Calu3 (cell line): ENCODE measurements at regions of chr18 and their contacts with region 1.

Region 1: GRCh38 chr18:3245853-3246634 is 1.6 kb upstream of the MYL12A start:
- DNase-seq: peak; percentile 89
- H3K4me3 Mint-ChIP-seq: peak overlapping the region; percentile 79
- H3K27ac Mint-ChIP-seq: peak overlapping the region; percentile 83
- H3K4me1 Mint-ChIP-seq: peaks cover 30% of the 10 kb centered on the region
- H3K27me3 Mint-ChIP-seq: no peaks in the 10 kb centered on the region
- CTCF ChIP-seq: peak; percentile 96

Region 2: DNA sequence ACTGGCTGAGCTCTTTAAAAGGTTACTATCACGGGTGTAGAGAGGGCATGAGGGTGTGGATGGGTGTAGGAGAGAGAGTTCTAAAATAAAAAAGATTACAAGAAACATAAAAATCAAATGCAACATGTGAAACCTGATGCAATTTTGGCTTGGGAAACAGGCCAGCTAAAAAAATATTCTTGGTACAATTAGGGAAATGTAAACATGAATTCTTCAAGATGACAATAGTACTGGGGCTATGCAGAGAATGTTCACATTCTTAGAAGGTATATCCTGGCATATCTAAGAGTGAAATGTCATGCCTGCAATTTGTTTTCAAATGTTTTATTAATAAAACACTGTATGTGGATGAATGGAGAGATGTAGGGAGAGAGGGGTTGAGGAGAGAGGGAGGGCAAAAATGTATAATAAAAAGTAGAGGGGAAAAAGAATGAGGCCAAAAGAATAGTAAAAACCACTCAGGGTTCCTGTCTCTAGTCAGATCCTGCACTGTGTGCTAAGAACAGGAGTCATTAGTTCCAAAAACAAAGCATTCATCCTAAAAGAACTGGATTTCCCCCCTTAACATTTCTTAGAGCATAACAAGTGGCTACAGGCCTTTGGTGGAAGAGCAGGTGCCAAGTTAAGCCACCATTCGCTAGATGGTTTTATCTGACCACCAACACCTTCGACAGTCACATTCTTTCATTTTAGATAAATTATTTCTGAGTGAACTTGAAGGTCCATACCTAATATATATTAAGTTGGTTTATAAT is 310.4 kb before region 1 on chr18:
- CTCF ChIA-PET with region 1: interaction called, 3 read pairs
- intact Hi-C with region 1: loop called (anchors 5 kb)
- DNase-seq: no peak
- H3K4me3 Mint-ChIP-seq: no peak overlapping the region
- H3K27ac Mint-ChIP-seq: no peak overlapping the region
- H3K4me1 Mint-ChIP-seq: peaks cover 17% of the 10 kb centered on the region
- H3K27me3 Mint-ChIP-seq: no peaks in the 10 kb centered on the region
- CTCF ChIP-seq: no peak

Region 3: GRCh38 chr18:2994603-2995432 is 251.2 kb before region 1 on chr18:
- CTCF ChIA-PET with region 1: interaction called, 12 read pairs
- intact Hi-C with region 1: loop called (anchors 5 kb)
- DNase-seq: peak; percentile 62
- H3K4me3 Mint-ChIP-seq: no peak overlapping the region
- H3K27ac Mint-ChIP-seq: peak overlapping the region; percentile 51
- H3K4me1 Mint-ChIP-seq: peaks cover 20% of the 10 kb centered on the region
- H3K27me3 Mint-ChIP-seq: no peaks in the 10 kb centered on the region
- CTCF ChIP-seq: peak; percentile 60

Region 4: GRCh38 chr18:3119401-3120335 is 126.4 kb before region 1 on chr18:
- CTCF ChIA-PET with region 1: interaction called, 4 read pairs
- intact Hi-C with region 1: loop called (anchors 5 kb)
- DNase-seq: no peak
- H3K4me3 Mint-ChIP-seq: no peak overlapping the region
- H3K27ac Mint-ChIP-seq: no peak overlapping the region
- H3K4me1 Mint-ChIP-seq: peaks cover 19% of the 10 kb centered on the region
- H3K27me3 Mint-ChIP-seq: no peaks in the 10 kb centered on the region
- CTCF ChIP-seq: no peak

Region 5: DNA sequence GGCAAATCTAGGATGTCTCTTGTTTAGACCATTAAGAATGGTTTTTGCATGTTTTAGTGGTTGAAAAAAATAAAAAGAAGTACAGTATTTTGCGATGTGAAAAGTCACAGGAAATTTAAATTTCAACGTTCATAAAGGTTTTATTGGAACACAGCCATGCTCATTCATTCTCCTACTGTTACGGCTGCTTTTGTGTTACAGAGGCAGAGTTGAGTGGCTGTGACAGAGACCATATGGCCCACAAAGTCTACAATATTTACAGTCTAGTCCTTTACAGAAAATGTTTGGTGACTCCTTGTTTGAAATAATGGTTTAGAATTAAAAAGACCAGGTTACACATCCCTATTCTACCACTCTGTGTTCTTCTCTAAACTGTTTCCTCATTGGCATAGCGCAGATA is 74.4 kb before region 1 on chr18:
- CTCF ChIA-PET with region 1: interaction called, 3 read pairs
- intact Hi-C with region 1: loop called (anchors 5 kb)
- DNase-seq: no peak
- H3K4me3 Mint-ChIP-seq: peak overlapping the region; percentile 6
- H3K27ac Mint-ChIP-seq: peak overlapping the region; percentile 24
- H3K4me1 Mint-ChIP-seq: peaks cover 14% of the 10 kb centered on the region
- H3K27me3 Mint-ChIP-seq: no peaks in the 10 kb centered on the region
- CTCF ChIP-seq: no peak

Region 6: DNA sequence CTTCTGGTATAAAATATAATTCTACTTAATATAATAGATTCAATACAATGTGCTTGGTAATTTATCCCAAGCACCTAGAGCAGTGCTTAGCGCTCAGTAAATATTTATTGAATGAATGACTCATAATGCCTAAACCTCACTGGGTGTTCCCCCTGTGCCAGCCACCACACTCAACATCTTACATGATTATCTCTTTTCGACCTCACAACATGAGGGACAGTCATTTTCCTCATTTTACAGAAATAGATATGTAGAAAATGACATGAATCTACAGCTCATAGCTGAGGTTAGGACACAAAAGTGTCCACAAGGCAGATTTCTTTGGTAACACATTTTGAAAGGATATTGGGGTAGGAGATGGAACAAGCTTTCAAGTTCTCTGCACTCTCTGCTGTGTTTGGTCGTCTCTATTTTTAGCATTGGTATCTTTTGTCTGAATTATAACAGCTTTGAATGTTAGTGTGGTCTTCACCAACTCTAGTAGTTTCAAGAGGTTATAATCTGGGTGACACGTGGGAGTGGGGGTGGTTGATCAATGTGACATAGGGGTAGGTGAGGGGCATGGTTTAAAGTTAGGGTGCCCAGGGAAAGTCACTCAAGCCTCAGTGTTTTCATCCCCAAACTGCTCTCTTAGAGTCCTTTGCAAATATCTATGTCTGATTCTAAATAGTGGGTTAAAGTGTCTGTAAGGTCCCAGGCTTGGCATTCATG is 36.0 kb before region 1 on chr18:
- CTCF ChIA-PET with region 1: interaction called, 13 read pairs
- intact Hi-C with region 1: loop called (anchors 5 kb)
- DNase-seq: no peak
- H3K4me3 Mint-ChIP-seq: peak overlapping the region; percentile 23
- H3K27ac Mint-ChIP-seq: peak overlapping the region; percentile 83
- H3K4me1 Mint-ChIP-seq: peaks cover 44% of the 10 kb centered on the region
- H3K27me3 Mint-ChIP-seq: no peaks in the 10 kb centered on the region
- CTCF ChIP-seq: no peak